AG04449 (cell line): ENCODE measurements at regions of chr17 and their contacts with region 1.

Region 1: DNA sequence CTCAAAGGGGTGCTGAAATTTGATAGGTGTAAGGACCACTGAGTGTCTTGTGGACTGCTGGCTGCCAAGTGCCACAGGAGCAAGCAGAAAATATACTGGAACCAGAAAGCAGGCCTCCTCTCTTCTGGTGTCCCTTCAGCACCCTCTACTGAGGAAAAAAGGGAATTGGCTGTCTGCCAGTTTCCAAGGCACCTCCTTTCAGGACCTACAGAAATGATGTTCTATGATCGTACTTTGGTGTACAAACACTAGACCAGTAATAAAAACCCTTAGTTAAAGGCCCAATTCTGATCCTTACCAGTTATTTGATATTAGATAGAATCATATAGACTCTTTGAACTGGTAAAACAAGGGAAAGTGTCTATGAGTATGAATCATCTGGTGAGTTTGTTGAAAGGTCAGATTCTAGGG is 35.8 kb upstream of the BCAS3 start:
- DNase-seq: no peak
- H3K4me3 ChIP-seq: no peak overlapping the region
- CTCF ChIP-seq: peak; percentile 57

Region 2: DNA sequence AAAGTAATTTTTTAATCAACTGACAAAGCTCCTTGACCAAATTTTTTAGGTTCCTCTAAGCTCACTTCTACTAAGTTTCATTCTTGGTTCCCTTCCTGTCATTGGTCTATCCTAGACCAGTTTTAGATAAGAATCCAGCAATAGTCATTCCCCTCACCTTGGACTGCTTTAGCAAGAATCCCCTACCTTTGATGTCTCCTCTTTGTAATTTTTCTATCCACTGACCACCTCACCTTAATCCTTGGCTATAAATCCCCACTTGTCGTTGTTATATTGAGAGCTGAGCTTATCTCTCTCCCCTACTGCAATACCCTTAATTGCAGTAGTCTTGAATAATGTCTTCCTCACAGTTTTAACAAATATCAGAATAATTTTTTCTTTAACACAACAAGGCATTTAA is 357.1 kb before region 1 on chr17:
- CTCF ChIA-PET with region 1: no interaction called
- POLR2A ChIA-PET with region 1: no interaction called
- DNase-seq: no peak
- H3K4me3 ChIP-seq: no peak overlapping the region
- CTCF ChIP-seq: no peak

Region 3: DNA sequence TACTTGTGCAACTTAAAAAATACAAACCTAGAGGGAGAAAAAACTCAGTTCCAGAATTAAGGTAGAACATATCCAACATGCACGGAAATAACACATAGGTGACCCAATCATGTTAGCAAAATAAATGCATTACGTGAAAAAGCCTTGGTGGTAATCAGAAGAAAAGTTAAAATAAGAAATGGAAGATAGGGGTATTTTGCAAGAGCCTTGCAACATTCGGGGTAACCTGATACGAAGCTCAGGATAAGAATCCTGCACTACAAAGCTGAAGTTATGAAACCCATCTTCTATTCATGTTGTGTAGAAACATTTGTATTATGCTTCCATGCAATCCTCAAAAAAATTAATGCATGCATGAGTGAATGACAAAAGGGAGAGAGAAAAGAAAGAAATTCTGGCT is 186.4 kb before region 1 on chr17:
- CTCF ChIA-PET with region 1: interaction called, 10 read pairs
- POLR2A ChIA-PET with region 1: no interaction called
- DNase-seq: no peak
- H3K4me3 ChIP-seq: no peak overlapping the region
- CTCF ChIP-seq: no peak

Region 4: GRCh38 chr17:60525685-60526514 is 115.9 kb before region 1 on chr17 and contains the start of gene APPBP2:
- CTCF ChIA-PET with region 1: interaction called, 14 read pairs
- POLR2A ChIA-PET with region 1: no interaction called
- DNase-seq: no peak
- H3K4me3 ChIP-seq: peak within 1 kb of the TSS; percentile 96
- CTCF ChIP-seq: no peak

Region 5: DNA sequence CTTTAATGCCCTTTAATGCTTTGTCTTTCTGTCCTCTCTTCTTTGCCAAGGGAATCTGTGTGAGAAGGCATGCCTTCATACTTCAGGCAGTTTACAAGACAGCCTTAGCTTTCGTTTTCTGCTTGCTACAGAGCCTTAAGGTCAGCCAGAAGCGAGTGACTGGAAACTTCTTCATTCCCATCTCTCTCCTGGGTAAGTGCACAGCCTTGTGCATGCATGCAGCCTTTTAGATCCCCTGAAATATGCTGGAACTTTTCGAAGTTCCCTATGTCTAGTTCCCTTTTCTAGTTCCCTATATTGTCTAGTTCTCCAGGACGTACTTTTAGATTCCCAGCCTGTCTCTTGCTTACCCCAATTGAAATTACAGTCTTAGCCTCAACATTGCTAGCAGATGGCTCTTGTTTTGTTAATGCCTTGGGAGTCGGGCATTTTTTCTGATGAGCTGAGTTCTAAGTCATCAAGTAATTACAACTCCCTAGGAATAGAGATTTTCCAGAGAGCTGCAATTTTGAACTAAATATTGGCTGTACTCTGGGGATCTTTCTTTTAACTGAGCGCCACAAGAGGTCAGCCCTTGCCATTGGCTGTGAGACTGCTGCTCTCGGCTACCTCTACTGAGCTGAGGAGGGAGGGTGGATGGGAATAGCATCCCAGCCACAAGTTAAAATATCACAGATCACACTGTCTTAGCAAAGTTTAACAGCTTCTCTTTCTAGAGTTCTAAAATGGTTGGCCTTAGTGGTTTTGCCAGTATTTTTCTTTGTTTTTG is 64.5 kb before region 1 on chr17:
- CTCF ChIA-PET with region 1: interaction called, 25 read pairs
- POLR2A ChIA-PET with region 1: no interaction called
- DNase-seq: no peak
- H3K4me3 ChIP-seq: peak overlapping the region; percentile 46
- CTCF ChIP-seq: peak; percentile 10

Region 6: GRCh38 chr17:60618854-60619412 is 22.9 kb before region 1 on chr17:
- CTCF ChIA-PET with region 1: interaction called, 23 read pairs
- POLR2A ChIA-PET with region 1: no interaction called
- DNase-seq: no peak
- H3K4me3 ChIP-seq: no peak overlapping the region
- CTCF ChIP-seq: no peak

Region 7: GRCh38 chr17:60652454-60653247 is 10.8 kb after region 1 on chr17:
- CTCF ChIA-PET with region 1: interaction called, 14 read pairs
- POLR2A ChIA-PET with region 1: no interaction called
- DNase-seq: no peak
- H3K4me3 ChIP-seq: no peak overlapping the region
- CTCF ChIP-seq: no peak

Region 8: GRCh38 chr17:60874772-60875171 is 233.0 kb after region 1 on chr17:
- CTCF ChIA-PET with region 1: no interaction called
- POLR2A ChIA-PET with region 1: no interaction called
- DNase-seq: no peak
- H3K4me3 ChIP-seq: no peak overlapping the region
- CTCF ChIP-seq: no peak